K562 (cell line): ENCODE measurements at regions of chr15 and their contacts with region 1.

Region 1: DNA sequence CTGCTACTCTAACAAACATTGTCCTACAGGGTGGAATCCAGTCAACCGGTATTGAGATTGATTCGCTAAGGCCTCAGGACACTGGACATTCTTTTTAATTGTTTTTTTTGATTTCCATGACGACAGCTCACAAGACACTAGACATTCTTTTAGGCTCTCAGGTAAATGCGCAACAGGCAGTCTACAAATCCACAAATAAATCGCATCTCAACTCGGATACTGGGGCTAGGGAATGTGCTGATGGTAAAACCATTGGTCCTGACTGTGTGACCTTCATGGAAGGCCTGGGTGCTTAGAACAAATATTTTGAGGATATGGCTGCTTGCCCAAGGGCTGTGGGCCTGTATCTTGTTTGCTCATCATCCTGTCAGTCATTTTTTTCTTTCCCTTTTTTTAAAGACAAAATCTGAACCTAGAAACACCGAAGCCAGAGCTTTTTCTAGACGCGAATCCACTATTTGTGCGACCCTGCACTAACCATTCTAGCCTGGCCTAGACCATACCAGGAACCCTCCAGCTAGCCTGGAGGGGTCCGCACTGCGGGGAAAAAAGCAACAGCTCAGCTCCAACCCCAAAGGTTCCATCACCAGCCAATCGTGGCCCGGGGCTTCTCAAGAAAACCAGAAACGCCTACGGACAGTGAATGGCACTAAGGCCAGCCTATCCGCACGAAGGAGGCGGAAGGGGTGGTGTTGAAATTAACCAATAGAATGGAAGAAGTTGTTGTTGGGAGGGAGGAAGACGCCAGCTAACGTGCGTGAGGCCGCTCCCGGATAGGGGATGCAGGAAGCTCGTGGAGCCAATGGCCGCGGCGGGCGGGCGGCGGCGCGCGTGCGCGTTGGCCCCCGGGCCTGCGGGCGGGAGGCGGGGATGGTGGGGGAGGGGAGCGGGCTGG is 18.1 kb upstream of the CHD2 start:
- DNase-seq: peak; percentile 98 to 99 (median 99)
- ATAC-seq: peak; percentile 88
- H3K4me3 ChIP-seq: peak overlapping the region; percentile 91
- H3K27ac ChIP-seq: peak overlapping the region; percentile 86
- H3K4me1 ChIP-seq: peaks cover 20 to 44% of the 10 kb centered on the region in 2 experiments
- H3K27me3 ChIP-seq: no peaks in the 10 kb centered on the region
- CTCF ChIP-seq: peak in 1 of 3 experiments; percentile 7; a peak in 1 of 6 replicates
- EP300 ChIP-seq: no peak; the same call in 1 of the 2 replicates
- POLR2A ChIP-seq: peak; percentile 98
- RAD21 ChIP-seq: peak; percentile 5 to 23; a peak in 1 of 4 replicates

Region 2: DNA sequence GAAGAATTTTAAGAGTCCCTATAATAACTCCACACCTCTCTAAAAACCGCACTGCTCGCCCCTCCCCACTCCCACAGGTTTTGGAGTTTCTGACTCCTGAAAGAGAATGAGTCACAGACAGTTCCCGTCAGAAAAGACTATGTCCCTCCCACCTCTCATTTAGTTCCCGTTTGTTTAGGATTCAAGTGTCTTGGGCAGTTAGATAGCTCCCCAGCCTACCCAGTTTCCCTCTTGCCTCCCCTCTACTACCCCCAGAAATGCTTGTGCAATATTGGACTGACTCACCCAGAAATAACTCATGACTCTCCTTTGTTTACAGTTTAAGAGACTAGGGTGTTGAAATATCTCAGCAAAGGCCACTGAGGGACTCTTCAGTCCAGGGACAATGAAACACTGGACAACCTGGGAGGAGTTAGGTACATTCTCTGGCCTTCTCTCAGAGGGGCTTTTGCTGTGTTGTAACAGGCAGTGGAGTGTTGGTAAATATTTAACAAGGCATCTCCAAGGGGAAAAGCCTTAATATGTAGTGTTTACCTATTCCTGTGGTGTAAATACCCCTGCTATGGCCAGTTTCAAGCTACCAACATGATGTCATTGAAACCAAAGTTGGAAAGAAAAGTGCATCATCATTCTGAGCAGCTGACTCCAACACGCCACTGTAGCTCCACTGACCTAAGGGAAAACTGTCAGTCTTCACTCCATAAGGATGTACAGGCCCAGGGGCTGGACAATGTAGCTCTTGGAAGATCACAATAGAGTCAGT is 78.0 kb before region 1 on chr15:
- CTCF ChIA-PET with region 1: no interaction called
- POLR2A ChIA-PET with region 1: interaction called, 110 read pairs
- in situ Hi-C with region 1: no loop called
- intact Hi-C with region 1: no loop called
- DNase-seq: peak; percentile 72 to 96 (median 80)
- ATAC-seq: peak; percentile 85
- H3K4me3 ChIP-seq: no peak overlapping the region
- H3K27ac ChIP-seq: peak overlapping the region; percentile 99
- H3K4me1 ChIP-seq: peaks cover 42 to 48% of the 10 kb centered on the region in 2 experiments
- H3K27me3 ChIP-seq: no peaks in the 10 kb centered on the region
- CTCF ChIP-seq: 0 out of 6 replicates have a peak, but pooled peaks of 1 of the 3 experiments have one; percentile 1
- EP300 ChIP-seq: peak; percentile 93
- POLR2A ChIP-seq: peak; percentile 53
- RAD21 ChIP-seq: no peak

Region 3: DNA sequence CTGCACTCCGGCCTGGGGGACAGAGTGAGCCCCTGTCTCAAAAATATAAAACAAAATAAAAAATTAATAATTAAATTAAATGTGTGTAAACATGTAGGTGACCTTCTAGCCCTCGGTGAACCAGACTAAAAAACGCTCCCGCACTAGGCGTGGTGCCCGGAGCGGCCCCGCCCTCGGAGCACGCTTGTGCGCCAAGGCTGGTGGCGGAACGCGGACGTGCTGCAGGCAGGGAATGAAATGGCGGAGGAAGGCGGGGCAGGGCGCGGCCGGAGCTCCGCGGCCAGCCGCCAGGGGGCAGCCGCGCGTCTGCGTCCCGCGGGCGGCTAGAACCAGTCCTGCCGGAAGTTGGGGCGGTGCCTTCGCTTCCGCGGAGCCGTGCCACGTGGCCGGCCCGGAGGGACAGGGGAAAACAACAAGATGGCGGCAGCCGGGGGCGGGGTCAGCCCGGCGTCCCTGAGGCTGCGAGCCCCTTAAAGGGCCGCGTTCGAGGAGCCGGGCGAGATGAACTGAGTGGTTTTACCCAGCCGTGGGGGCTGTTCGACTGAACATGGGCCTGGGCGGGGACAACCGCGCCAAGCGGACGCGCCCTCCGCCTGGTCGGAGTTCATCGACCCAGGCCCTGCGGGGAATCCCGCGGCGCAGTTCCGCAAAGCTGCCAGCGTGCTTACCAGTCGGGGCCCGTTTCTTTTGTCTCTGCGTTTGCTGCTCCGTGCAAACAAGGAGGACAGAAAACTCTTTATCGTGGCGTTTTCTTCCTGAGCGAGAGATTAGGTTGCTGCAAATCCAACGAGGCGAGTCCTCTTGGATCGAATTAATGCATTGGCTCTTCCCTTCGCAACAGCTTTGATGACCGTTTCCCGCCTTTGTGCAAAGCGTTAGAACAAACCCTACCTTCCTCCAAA is 72.8 kb before region 1 on chr15:
- CTCF ChIA-PET with region 1: no interaction called
- POLR2A ChIA-PET with region 1: interaction called, 110 read pairs
- in situ Hi-C with region 1: loop called (anchors 5 kb)
- intact Hi-C with region 1: loop called (anchors 1 kb)
- DNase-seq: peak; percentile 95 to 98 (median 95)
- ATAC-seq: peak; percentile 83
- H3K4me3 ChIP-seq: peak overlapping the region; percentile 39
- H3K27ac ChIP-seq: peak overlapping the region; percentile 92
- H3K4me1 ChIP-seq: peaks cover 19 to 38% of the 10 kb centered on the region in 2 experiments
- H3K27me3 ChIP-seq: no peaks in the 10 kb centered on the region
- CTCF ChIP-seq: peak; percentile 91 to 97 (median 96)
- EP300 ChIP-seq: peak; percentile 72
- POLR2A ChIP-seq: peak; percentile 87
- RAD21 ChIP-seq: peak; percentile 94 to 96

Region 4: GRCh38 chr15:92820236-92821021 is 61.6 kb before region 1 on chr15:
- CTCF ChIA-PET with region 1: no interaction called
- POLR2A ChIA-PET with region 1: interaction called, 17 read pairs
- in situ Hi-C with region 1: no loop called
- intact Hi-C with region 1: loop called (anchors 2 kb)
- DNase-seq: peak; percentile 92 to 96 (median 94)
- ATAC-seq: peak; percentile 85
- H3K4me3 ChIP-seq: peak overlapping the region; percentile 25
- H3K27ac ChIP-seq: peak overlapping the region; percentile 80
- H3K4me1 ChIP-seq: peaks cover 24 to 32% of the 10 kb centered on the region in 2 experiments
- H3K27me3 ChIP-seq: no peaks in the 10 kb centered on the region
- CTCF ChIP-seq: no peak
- EP300 ChIP-seq: no peak
- POLR2A ChIP-seq: peak; percentile 79
- RAD21 ChIP-seq: 0 out of 4 replicates have a peak, but pooled peaks of 1 of the 2 experiments have one; percentile 14

Region 5: GRCh38 chr15:92831655-92832328 is 50.3 kb before region 1 on chr15:
- CTCF ChIA-PET with region 1: no interaction called
- POLR2A ChIA-PET with region 1: interaction called, 20 read pairs
- in situ Hi-C with region 1: no loop called
- intact Hi-C with region 1: no loop called
- DNase-seq: peak; percentile 72 to 95 (median 83)
- ATAC-seq: peak; percentile 99
- H3K4me3 ChIP-seq: peak overlapping the region; percentile 2; the same call in 1 of the 2 replicates
- H3K27ac ChIP-seq: peak overlapping the region; percentile 85
- H3K4me1 ChIP-seq: peaks cover 15 to 22% of the 10 kb centered on the region in 2 experiments
- H3K27me3 ChIP-seq: no peaks in the 10 kb centered on the region
- CTCF ChIP-seq: 0 out of 6 replicates have a peak, but pooled peaks of 1 of the 3 experiments have one; percentile 23
- EP300 ChIP-seq: 0 out of 2 replicates have a peak, but pooled peaks have one; percentile 19
- POLR2A ChIP-seq: peak; percentile 75
- RAD21 ChIP-seq: peak in 1 of 2 experiments; percentile 38; a peak in 3 of 4 replicates

Region 6: GRCh38 chr15:92845126-92845508 is 36.9 kb before region 1 on chr15:
- CTCF ChIA-PET with region 1: no interaction called
- POLR2A ChIA-PET with region 1: interaction called, 6 read pairs
- in situ Hi-C with region 1: no loop called
- intact Hi-C with region 1: loop called (anchors 1 kb)
- DNase-seq: peak in 1 of 4 experiments; percentile 36
- ATAC-seq: no peak
- H3K4me3 ChIP-seq: no peak overlapping the region
- H3K27ac ChIP-seq: peak overlapping the region; percentile 37; the same call in 1 of the 3 replicates
- H3K4me1 ChIP-seq: peaks cover 8 to 23% of the 10 kb centered on the region in 2 experiments
- H3K27me3 ChIP-seq: no peaks in the 10 kb centered on the region
- CTCF ChIP-seq: no peak
- EP300 ChIP-seq: no peak
- POLR2A ChIP-seq: no peak
- RAD21 ChIP-seq: no peak

Region 7: GRCh38 chr15:92868992-92869988 is 12.8 kb before region 1 on chr15:
- CTCF ChIA-PET with region 1: no interaction called
- POLR2A ChIA-PET with region 1: interaction called, 13 read pairs
- in situ Hi-C with region 1: no loop called
- intact Hi-C with region 1: no loop called
- DNase-seq: no peak
- ATAC-seq: no peak
- H3K4me3 ChIP-seq: no peak overlapping the region
- H3K27ac ChIP-seq: no peak overlapping the region
- H3K4me1 ChIP-seq: peaks cover 8% of the 10 kb centered on the region in 2 experiments; a peak in 4 of 5 replicates
- H3K27me3 ChIP-seq: no peaks in the 10 kb centered on the region
- CTCF ChIP-seq: no peak
- EP300 ChIP-seq: no peak
- POLR2A ChIP-seq: no peak
- RAD21 ChIP-seq: no peak

Region 8: DNA sequence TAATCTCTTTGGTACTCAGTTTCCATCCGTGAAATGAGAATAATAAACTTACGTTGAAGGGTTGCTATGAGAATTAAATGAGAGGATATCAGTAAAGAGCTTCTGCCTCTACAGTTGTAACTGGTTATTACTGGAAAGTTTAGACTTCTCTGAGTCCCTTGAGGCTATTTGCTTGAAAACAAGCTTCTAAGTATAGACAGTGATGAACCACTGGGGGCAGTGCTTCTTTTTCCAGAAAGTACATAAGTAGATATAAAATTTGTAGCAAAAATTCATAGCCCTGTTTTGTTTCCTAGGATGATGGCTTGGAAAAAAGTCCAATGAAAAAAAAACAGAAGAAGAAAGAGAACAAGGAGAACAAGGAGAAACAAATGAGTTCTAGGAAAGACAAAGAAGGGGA is 119.8 kb after region 1 on chr15:
- CTCF ChIA-PET with region 1: no interaction called
- POLR2A ChIA-PET with region 1: no interaction called
- in situ Hi-C with region 1: no loop called
- intact Hi-C with region 1: no loop called
- DNase-seq: no peak
- ATAC-seq: peak; percentile 48; the same call in 1 of the 3 replicates
- H3K4me3 ChIP-seq: no peak overlapping the region
- H3K27ac ChIP-seq: no peak overlapping the region
- H3K4me1 ChIP-seq: no peaks in the 10 kb centered on the region
- H3K27me3 ChIP-seq: no peaks in the 10 kb centered on the region
- CTCF ChIP-seq: no peak
- EP300 ChIP-seq: no peak
- POLR2A ChIP-seq: no peak
- RAD21 ChIP-seq: no peak